HEK293 (cell line): ENCODE measurements at regions of chr5 and their contacts with region 1.

Region 1: DNA sequence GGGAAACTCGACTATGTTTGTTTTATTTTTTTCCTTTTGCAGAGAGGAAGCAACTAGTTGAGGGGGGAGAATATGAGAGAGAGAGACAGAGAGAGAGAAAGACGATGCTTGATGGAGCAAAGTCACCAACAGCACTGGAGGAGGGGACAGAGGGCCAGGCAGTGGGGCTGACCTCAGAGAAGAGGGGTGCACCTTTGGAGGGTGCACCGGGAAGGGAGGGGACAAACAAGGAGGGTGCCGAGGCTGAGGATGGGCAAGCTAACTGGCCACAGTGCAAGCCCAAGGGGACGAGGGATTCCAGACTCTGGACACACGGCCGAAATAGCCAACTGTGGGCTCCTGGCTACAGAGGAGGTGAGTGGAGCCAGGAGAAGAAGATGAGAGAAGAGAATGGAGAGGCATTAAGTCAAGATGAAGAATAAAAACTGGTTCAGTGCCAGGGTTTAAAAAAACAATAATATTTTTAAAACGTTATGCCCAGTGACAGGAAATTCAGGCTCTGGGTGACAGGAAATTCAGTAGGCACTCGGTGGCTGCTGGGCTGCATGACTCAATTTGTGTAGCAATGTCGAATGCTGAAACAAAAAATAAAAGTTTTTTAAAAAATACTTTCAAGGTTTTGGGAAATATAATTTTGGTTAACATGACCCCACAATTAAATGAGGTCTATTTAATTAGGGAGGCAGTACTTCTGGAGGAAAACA is 13.3 kb upstream of the GLRX start:
- H3K4me3 ChIP-seq: no peak overlapping the region
- H3K27ac ChIP-seq: no peak overlapping the region
- H3K4me1 ChIP-seq: peaks cover 7% of the 10 kb centered on the region
- CTCF ChIP-seq: no peak

Region 2: GRCh38 chr5:95822542-95823181 is 13.2 kb before region 1 on chr5 and contains the start of gene GLRX:
- CTCF ChIA-PET with region 1: interaction called, 5 read pairs
- POLR2A ChIA-PET with region 1: interaction called, 31 read pairs
- H3K4me3 ChIP-seq: peak within 1 kb of the TSS; percentile 74
- H3K27ac ChIP-seq: peak within 1 kb of the TSS; percentile 45
- H3K4me1 ChIP-seq: peaks cover 17% of the 10 kb centered on the region
- CTCF ChIP-seq: no peak

Region 3: GRCh38 chr5:96187309-96188027 is 351.6 kb after region 1 on chr5:
- CTCF ChIA-PET with region 1: no interaction called
- POLR2A ChIA-PET with region 1: no interaction called
- H3K4me3 ChIP-seq: no peak overlapping the region
- H3K27ac ChIP-seq: no peak overlapping the region
- H3K4me1 ChIP-seq: peaks cover 4% of the 10 kb centered on the region; the same call in 1 of the 2 replicates
- CTCF ChIP-seq: no peak